PC-3 (cell line): ENCODE measurements at regions of chr7 and their contacts with region 1.

Region 1: DNA sequence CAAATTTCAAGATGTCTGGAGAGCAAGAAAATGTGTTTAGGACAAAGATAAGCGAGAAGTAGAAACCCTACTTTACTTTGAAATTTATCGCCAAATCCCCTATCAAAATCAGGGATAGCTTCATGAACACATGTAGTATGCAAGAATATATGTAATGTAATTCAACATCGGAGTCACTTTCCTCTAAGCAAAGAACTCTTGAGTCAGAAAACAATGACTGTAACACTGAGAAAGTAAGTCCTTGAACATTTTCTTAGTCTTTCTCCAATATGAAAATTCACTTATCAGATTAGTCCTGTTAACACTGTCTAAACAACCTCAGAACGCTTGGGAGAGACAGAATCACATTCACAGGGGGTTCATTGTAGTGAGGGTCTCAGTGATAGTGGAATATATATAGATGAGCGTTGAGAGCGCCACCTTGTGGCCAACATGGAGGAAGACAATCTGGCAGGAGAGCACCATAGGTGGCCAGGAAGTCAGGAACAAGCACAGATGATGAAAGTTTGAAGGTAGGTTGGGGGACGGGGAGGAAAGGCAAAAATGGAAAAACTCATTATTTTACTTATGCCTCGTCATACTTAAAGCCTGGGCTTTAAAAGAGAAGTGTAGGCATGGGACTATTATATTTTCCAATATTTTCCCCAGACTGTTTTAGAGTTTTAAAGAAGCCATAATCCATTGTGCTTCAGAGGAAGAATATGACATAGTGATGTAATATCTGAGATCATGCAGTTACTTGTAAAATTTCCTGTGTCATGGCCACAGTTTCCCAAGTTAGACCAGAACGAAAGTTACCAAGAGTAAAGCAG is 115.5 kb upstream of the GNAI1 start:
- DNase-seq: peak; percentile 56
- ATAC-seq: peak; percentile 75
- H3K4me3 ChIP-seq: no peak overlapping the region
- H3K27ac ChIP-seq: no peak overlapping the region
- H3K4me1 ChIP-seq: peaks cover 9% of the 10 kb centered on the region
- H3K27me3 ChIP-seq: no peaks in the 10 kb centered on the region
- CTCF ChIP-seq: peak; percentile 95

Region 2: GRCh38 chr7:79298145-79298760 is 720.9 kb before region 1 on chr7:
- CTCF ChIA-PET with region 1: no interaction called
- POLR2A ChIA-PET with region 1: no interaction called
- intact Hi-C with region 1: loop called (anchors 10 kb)
- DNase-seq: peak; percentile 77
- ATAC-seq: no peak
- H3K4me3 ChIP-seq: no peak overlapping the region
- H3K27ac ChIP-seq: no peak overlapping the region
- H3K4me1 ChIP-seq: peaks cover 14% of the 10 kb centered on the region
- H3K27me3 ChIP-seq: no peaks in the 10 kb centered on the region
- CTCF ChIP-seq: peak; percentile 73

Region 3: DNA sequence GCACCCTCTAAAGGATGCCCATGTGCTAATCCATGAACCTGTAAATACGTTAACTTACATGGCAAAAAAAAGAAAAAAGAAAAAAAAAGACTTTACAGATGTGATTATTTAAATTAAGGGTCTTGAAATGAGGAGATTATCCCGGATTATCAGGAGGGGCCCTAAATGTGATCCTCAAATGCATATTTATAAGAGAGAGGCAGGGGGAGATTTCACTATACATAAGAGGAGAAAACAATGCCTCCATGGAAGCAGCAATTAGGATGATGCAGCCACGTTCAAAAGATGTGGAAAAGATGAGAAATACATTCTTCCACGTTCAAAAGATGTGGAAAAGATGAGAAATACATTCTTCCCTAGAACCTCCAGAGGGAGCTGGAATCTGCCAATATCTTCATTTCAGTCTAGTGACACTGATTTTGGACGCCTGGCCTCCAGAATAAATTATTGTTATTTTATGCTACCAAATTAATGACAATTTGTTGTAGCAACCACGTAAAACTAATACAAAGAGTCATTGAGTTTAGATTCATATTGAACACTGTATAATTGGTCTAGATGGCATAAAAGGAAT is 212.9 kb before region 1 on chr7:
- CTCF ChIA-PET with region 1: no interaction called
- POLR2A ChIA-PET with region 1: no interaction called
- intact Hi-C with region 1: loop called (anchors 1 kb)
- DNase-seq: peak; percentile 55
- ATAC-seq: peak; percentile 65
- H3K4me3 ChIP-seq: no peak overlapping the region
- H3K27ac ChIP-seq: no peak overlapping the region
- H3K4me1 ChIP-seq: no peaks in the 10 kb centered on the region
- H3K27me3 ChIP-seq: no peaks in the 10 kb centered on the region
- CTCF ChIP-seq: peak; percentile 69

Region 4: GRCh38 chr7:79876848-79877252 is 142.3 kb before region 1 on chr7:
- CTCF ChIA-PET with region 1: no interaction called
- POLR2A ChIA-PET with region 1: no interaction called
- intact Hi-C with region 1: loop called (anchors 5 kb)
- DNase-seq: peak; percentile 91
- ATAC-seq: peak; percentile 98
- H3K4me3 ChIP-seq: no peak overlapping the region
- H3K27ac ChIP-seq: 0 out of 2 replicates have a peak overlapping the region, but pooled peaks have one; percentile 10
- H3K4me1 ChIP-seq: peaks cover 6% of the 10 kb centered on the region; the same call in 1 of the 2 replicates
- H3K27me3 ChIP-seq: no peaks in the 10 kb centered on the region
- CTCF ChIP-seq: no peak

Region 5: GRCh38 chr7:79949778-79950177 is 69.4 kb before region 1 on chr7:
- CTCF ChIA-PET with region 1: no interaction called
- POLR2A ChIA-PET with region 1: no interaction called
- intact Hi-C with region 1: loop called (anchors 2 kb)
- DNase-seq: no peak
- ATAC-seq: no peak
- H3K4me3 ChIP-seq: no peak overlapping the region
- H3K27ac ChIP-seq: no peak overlapping the region
- H3K4me1 ChIP-seq: no peaks in the 10 kb centered on the region
- H3K27me3 ChIP-seq: no peaks in the 10 kb centered on the region
- CTCF ChIP-seq: no peak

Region 6: DNA sequence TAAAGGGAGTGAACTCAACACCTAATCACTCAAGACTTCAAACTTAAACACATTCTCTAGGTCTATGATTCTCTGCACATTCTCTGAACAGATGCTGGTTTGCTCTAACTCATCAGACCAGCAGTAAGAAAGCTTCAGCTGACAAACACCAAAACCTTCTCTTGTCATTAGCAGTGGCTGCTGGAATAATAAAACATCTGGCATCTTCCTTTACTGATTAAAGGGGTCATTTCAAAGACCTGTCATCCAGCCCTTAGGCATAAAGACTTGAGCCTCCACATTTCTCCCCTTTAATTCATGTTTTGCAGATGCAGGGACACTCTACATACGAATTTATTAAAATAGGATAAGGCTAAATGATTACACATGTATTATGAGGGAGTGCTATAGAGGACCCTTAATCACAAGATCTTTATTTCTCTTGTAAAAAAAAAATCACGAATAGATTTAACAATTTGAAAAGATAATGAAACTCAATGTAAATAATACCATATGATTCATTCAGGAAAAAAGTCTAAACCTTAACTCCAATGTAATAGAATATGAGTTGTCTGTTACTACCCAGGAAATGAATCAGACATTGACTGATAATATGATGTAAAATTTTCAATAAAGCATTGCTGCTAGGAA is 36.9 kb before region 1 on chr7:
- CTCF ChIA-PET with region 1: no interaction called
- POLR2A ChIA-PET with region 1: no interaction called
- intact Hi-C with region 1: loop called (anchors 2 kb)
- DNase-seq: peak; percentile 65
- ATAC-seq: peak; percentile 75
- H3K4me3 ChIP-seq: peak overlapping the region; percentile 34; the same call in 1 of the 2 replicates
- H3K27ac ChIP-seq: peak overlapping the region; percentile 86
- H3K4me1 ChIP-seq: peaks cover 52% of the 10 kb centered on the region
- H3K27me3 ChIP-seq: no peaks in the 10 kb centered on the region
- CTCF ChIP-seq: no peak